BJ (cell line): ENCODE measurements at regions of chr10 and their contacts with region 1.

Region 1: DNA sequence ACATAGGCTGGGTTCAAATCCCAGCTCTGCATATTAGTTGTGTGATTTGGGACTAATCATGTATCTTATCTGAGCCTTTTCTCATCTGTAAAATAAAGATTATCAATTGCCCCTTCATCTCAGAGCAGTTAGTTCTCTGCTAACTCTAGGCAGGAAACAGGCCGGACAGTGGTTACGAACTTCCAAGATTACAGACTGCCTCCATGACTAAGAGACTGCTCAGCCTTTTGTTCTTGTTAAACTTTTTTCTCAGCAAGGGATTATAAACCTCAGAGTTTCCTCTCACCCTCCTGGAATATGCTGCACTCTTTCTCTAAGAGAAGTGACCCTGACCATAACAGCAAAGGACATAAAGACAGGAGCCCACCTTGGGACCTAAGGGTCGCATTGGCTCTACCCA is 52.5 kb upstream of the NFKB2 start:
- DNase-seq: no peak
- H3K4me3 ChIP-seq: no peak overlapping the region
- H3K27me3 ChIP-seq: no peaks in the 10 kb centered on the region
- CTCF ChIP-seq: no peak

Region 2: DNA sequence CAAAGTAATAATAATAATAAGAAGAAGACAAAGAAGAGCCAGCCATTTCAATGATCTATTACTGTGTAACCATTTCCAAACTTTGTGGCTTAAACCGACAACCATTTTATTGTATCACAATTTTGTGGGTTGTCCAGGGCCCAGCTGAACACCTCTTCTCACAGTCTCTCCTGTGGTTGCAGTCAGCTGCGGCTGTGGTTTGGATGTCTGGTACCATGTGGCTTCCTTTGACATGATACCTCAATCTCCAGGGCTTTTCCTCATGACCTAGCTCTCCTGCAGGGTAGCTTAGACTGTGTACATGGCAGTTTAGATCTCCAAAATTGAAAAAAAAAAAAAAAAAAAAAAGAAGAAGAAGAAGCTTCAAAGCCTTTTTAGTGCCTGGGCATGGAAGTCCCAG is 20.0 kb before region 1 on chr10:
- CTCF ChIA-PET with region 1: interaction called, 3 read pairs
- POLR2A ChIA-PET with region 1: interaction called, 13 read pairs
- DNase-seq: no peak
- H3K4me3 ChIP-seq: no peak overlapping the region
- H3K27me3 ChIP-seq: no peaks in the 10 kb centered on the region
- CTCF ChIP-seq: no peak

Region 3: GRCh38 chr10:102492983-102493382 is 150.0 kb after region 1 on chr10:
- CTCF ChIA-PET with region 1: no interaction called
- POLR2A ChIA-PET with region 1: no interaction called
- DNase-seq: no peak
- H3K4me3 ChIP-seq: no peak overlapping the region
- H3K27me3 ChIP-seq: no peaks in the 10 kb centered on the region
- CTCF ChIP-seq: no peak